Sigmoid colon (tissue), 7 donors: ENCODE measurements at regions of chr19 and their contacts with region 1.

Region 1: DNA sequence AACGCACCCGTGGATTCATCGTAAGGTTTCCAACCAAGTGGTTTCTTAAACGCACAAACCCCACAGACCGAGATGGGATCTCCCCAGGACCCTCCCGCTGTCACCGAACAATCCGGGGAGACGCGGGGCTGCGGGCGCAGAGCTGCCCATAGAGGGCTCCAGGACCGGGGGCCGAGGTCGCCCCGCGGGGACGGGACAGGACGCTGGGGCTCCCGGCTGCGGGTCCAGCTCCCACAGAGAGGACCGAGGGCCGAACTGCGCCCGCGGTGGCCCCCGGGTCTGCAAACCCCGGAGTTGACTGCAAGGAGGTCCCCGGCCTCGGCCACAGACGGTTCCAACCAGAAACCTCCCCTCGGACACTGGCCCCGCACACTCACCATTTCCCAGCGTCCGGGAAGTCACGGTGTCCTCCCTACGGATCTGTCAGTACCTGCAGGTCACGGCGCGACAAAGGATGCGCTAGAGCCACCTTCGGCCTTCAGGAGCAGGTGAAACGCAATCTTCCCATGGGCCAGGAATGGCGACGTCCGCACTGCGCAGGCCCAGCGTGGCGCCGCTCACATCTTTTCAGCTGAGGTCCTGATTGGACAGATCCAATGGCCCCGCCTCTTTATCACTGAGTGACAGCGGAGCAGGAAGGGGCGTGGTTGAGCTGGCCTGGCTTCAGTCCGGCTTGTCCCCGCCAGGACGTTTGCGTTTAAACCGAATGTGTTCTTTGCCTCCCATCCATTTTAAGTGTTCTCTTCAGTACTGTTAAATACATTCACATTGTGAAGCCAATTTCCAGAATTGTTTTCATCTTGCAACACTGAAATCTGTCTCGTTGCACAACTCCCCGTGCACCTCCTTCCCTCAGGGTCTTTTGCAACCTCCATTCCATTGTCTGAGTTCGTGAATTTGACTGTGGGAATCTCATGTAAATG is at the start of gene ZNF14:
- DNase-seq: peak; percentile 97
- H3K4me3 ChIP-seq: peak within 1 kb of the TSS; percentile 72 to 85 (median 80)
- H3K27ac ChIP-seq: peak within 1 kb of the TSS; percentile 74 to 80 (median 78)
- H3K4me1 ChIP-seq: peaks cover 0 to 12% (median 10%) of the 10 kb centered on the region in 4 donors
- H3K27me3 ChIP-seq: no peaks in the 10 kb centered on the region
- CTCF ChIP-seq: peak in 1 of 4 experiments; percentile 10
- EP300 ChIP-seq: no peak
- POLR2A ChIP-seq: peak; percentile 70 to 72
- total RNA-seq, gene ZNF14: 7.8 to 14.5 (median 9.5) TPM

Region 2: GRCh38 chr19:19776041-19777008 is 43.5 kb after region 1 on chr19:
- intact Hi-C with region 1: loop called (anchors 1 kb)
- DNase-seq: peak; percentile 99
- H3K4me3 ChIP-seq: peak overlapping the region; percentile 56 to 75 (median 70)
- H3K27ac ChIP-seq: peak overlapping the region; percentile 70 to 79 (median 76)
- H3K4me1 ChIP-seq: peaks cover 0 to 24% (median 18%) of the 10 kb centered on the region in 4 donors
- H3K27me3 ChIP-seq: no peaks in the 10 kb centered on the region
- CTCF ChIP-seq: no peak
- EP300 ChIP-seq: no peak
- POLR2A ChIP-seq: no peak

Region 3: DNA sequence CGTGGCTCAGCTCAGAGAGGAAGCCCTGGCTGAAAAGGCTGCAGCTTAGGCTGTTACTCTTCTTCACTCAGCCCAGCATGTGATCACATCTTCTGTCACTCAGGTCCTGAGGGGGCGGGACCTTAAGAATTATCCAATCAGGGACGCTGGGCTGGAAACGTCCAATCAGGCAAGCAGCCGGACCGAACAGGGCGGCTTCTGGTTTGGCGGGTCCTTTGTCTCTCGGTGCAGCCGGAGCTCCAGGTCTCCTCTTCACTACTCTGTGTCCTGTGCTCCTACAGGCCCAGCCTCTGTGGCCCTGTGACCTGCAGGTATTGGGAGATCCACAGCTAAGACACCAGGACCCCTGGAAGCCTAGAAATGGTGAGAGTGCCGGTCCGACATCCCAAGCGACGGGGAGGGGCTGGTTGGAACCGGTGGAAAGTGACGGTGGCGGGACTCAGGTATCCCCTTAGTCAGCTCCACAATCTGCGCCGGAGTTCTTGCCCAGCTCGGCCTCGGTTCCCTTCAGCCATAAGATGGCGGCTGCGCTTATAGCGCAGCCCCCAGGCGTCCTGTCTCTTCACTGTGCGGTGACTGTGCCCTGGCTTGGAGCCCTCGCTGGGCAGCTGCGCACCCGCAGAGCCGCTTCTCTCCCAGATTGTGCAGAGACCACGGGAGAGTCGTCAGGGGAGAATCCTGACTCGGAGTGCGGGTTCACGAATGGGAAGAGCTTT is 168.0 kb after region 1 on chr19 and contains the start of gene ZNF93:
- intact Hi-C with region 1: loop called (anchors 10 kb)
- DNase-seq: peak; percentile 98
- H3K4me3 ChIP-seq: peak within 1 kb of the TSS; percentile 54 to 85 (median 69)
- H3K27ac ChIP-seq: peak within 1 kb of the TSS; percentile 83 to 99 (median 88)
- H3K4me1 ChIP-seq: peaks cover 0 to 23% (median 6%) of the 10 kb centered on the region in 4 donors
- H3K27me3 ChIP-seq: no peaks in the 10 kb centered on the region
- CTCF ChIP-seq: no peak
- EP300 ChIP-seq: no peak
- POLR2A ChIP-seq: peak; percentile 27 to 63
- total RNA-seq, gene ZNF93: 5.1 to 14.4 (median 6.7) TPM